SK-N-SH (cell line): ENCODE measurements at regions of chr5 and their contacts with region 1.

Region 1: GRCh38 chr5:159061179-159061796 is 38.4 kb downstream of the EBF1 start:
- DNase-seq: peak; percentile 41
- H3K4me3 ChIP-seq: peak overlapping the region; percentile 37 to 45
- H3K27ac ChIP-seq: peak overlapping the region; percentile 54 to 78
- H3K4me1 ChIP-seq: peaks cover 0 to 13% of the 10 kb centered on the region in 2 experiments; a peak in 2 of 4 replicates
- H3K27me3 ChIP-seq: no peaks in the 10 kb centered on the region
- CTCF ChIP-seq: no peak
- EP300 ChIP-seq: no peak; a peak in 1 of 4 replicates
- RAD21 ChIP-seq: 0 out of 2 replicates have a peak, but pooled peaks have one; percentile 10

Region 2: DNA sequence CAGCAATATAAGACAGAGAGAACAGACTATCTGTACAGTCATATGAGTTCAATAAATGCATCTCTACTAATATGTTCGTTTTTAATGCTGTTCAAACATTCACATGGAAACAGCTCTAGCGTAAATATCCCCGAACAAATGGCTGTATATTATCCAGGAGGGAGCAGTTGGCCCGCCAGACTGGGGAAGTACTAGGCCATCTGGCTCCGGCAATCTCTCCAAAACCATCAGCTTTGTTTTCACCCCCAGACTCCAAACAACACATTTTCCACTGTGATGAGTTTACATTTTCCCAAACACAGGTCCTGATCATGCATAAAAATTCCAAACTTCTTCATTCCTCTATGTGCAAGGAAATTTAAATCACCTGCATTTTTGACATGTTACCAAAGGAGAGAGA is 29.8 kb after region 1 on chr5:
- CTCF ChIA-PET with region 1: interaction called, 11 read pairs
- POLR2A ChIA-PET with region 1: no interaction called
- DNase-seq: no peak
- H3K4me3 ChIP-seq: no peak overlapping the region
- H3K27ac ChIP-seq: no peak overlapping the region
- H3K4me1 ChIP-seq: peaks cover 0 to 4% of the 10 kb centered on the region in 2 experiments; a peak in 2 of 4 replicates
- H3K27me3 ChIP-seq: no peaks in the 10 kb centered on the region
- CTCF ChIP-seq: no peak
- EP300 ChIP-seq: no peak
- RAD21 ChIP-seq: no peak

Region 3: DNA sequence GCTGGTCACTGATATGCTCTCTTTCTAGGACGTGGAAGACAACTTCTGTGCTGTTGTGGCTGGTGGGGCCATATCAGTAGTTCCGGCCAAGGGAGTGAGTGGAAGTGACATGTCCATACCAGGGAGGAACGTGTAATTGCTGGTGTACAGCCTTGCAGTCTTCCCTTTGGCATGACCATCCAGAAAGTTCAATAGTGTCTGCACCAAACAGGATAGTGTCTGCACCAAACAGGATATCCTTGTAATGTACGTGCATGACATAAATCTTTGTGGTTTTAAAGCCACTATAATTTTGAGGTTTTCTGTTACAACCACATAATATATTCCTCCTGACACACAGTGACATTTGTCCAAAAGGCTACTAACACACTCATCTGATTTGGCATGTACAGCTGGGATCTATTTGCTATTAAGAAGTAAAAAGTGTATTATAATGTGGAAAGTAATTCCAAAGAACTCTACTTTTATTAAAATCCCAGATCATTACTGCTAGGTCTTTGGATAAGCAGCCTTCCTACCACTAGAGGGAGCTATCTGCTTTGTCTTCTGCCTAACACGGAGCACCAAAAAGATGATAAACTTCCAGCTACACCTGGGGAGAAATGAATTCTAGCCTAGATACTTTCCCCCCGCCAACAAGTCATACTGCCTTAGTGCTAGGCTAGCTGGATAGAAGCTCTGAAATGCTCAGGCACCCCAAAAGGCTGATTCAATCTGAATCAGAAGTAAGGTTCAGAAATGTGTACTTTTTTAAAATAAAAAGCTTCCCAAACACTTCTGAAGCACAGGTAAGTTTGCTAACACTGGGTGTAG is 95.3 kb after region 1 on chr5:
- CTCF ChIA-PET with region 1: no interaction called
- POLR2A ChIA-PET with region 1: no interaction called
- DNase-seq: peak; percentile 68
- H3K4me3 ChIP-seq: peak overlapping the region in 1 of 2 experiments; percentile 27; a peak in 1 of 4 replicates
- H3K27ac ChIP-seq: no peak overlapping the region
- H3K4me1 ChIP-seq: peaks cover 0 to 18% of the 10 kb centered on the region in 2 experiments; a peak in 3 of 4 replicates
- H3K27me3 ChIP-seq: no peaks in the 10 kb centered on the region
- CTCF ChIP-seq: peak; percentile 94
- EP300 ChIP-seq: no peak
- RAD21 ChIP-seq: peak; percentile 91